Adrenal gland (tissue), 19 donors: ENCODE measurements at regions of chr16 and their contacts with region 1.

Region 1: GRCh38 chr16:55817236-55817912 is 15.5 kb downstream of the CES1 start:
- DNase-seq: peak in 1 of 7 donors; percentile 10
- H3K4me3 ChIP-seq: no peak overlapping the region
- H3K27ac ChIP-seq: no peak overlapping the region
- H3K4me1 ChIP-seq: no peaks in the 10 kb centered on the region
- H3K27me3 ChIP-seq: no peaks in the 10 kb centered on the region
- CTCF ChIP-seq: no peak
- POLR2A ChIP-seq: no peak

Region 2: GRCh38 chr16:55746081-55746480 is 71.3 kb before region 1 on chr16:
- intact Hi-C with region 1: loop called in 1 of 2 experiments (anchors 10 kb)
- DNase-seq: peak in 1 of 7 donors; percentile 3
- H3K4me3 ChIP-seq: no peak overlapping the region
- H3K27ac ChIP-seq: no peak overlapping the region
- H3K4me1 ChIP-seq: no peaks in the 10 kb centered on the region
- H3K27me3 ChIP-seq: no peaks in the 10 kb centered on the region
- CTCF ChIP-seq: no peak
- POLR2A ChIP-seq: no peak

Region 3: DNA sequence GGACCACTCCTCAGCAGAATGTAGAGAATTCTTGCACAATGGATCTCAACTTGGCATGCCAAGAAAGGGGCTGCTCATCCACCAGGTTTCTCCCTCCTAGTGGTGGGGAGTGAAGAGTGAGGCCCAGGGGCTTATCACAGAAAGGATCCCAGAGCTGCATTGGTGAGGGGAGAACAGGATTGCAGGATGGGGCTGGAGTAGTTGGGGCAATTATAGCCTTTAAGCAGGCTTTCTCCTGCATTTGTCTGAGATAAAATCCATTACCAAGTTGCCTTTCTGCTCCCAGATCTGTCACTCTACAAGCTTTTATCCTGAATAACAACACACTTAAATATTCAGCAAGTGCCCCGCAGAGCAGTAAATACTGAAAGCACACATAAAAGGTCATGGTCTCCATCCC is 188.6 kb after region 1 on chr16:
- intact Hi-C with region 1: no loop called
- DNase-seq: no peak
- H3K4me3 ChIP-seq: no peak overlapping the region
- H3K27ac ChIP-seq: no peak overlapping the region
- H3K4me1 ChIP-seq: no peaks in the 10 kb centered on the region
- H3K27me3 ChIP-seq: no peaks in the 10 kb centered on the region
- CTCF ChIP-seq: no peak
- POLR2A ChIP-seq: no peak